Activated CD4-positive, alpha-beta T cell treated with anti-CD3 and anti-CD28 coated beads for 36 hours (primary cell): ENCODE measurements at regions of chrX and their contacts with region 1.

Region 1: DNA sequence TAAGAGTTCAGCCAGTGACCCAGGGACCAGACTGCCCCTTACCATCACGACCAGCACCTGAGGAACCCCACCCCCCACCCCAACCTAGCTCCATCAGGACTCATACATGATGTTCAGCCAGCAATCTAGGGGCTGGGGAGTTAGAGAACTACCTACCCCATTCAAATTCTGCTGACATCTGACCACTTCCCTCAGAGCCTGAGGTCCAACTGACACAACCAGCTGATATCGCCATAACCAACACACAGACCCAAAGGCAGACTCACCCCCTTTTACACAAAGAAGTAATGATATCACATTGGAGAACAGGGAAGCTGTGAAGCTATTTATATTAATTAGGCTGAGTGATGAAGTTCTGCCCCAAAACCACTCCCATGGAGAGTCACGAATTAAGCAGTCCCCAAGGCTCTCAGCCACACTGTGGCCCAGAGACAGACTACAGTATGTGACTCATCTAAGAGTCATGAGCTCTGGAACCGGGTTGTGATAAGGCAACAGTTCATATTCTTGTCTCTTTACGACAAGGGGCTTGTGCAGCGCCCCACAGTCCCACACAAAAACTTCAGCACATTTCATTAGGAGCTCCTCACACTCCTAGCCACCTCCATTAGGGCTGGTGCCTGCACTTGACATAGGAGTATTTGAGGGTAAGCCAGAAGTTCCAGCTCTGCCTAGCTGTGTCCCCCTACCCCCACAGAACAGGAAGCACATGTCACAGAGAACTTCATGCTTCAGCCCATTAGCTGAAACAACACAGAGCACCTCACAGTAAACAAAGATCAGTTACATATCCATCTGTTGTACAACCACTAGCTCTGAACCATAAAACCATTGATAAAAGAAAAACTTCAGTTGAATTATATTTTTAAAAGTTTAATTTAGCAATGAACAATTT is 184.7 kb upstream of the ZCCHC13 start:
- DNase-seq: no peak
- ATAC-seq: no peak
- H3K4me3 Mint-ChIP-seq: no peak overlapping the region
- H3K27ac Mint-ChIP-seq: no peak overlapping the region
- H3K4me1 Mint-ChIP-seq: no peaks in the 10 kb centered on the region
- H3K27me3 Mint-ChIP-seq: no peaks in the 10 kb centered on the region

Region 2: GRCh38 chrX:74138943-74139342 is 19.7 kb after region 1 on chrX:
- CTCF ChIA-PET with region 1: interaction called, 3 read pairs
- POLR2A ChIA-PET with region 1: interaction called, 12 read pairs
- intact Hi-C with region 1: no loop called
- DNase-seq: no peak
- ATAC-seq: no peak
- H3K4me3 Mint-ChIP-seq: no peak overlapping the region
- H3K27ac Mint-ChIP-seq: no peak overlapping the region
- H3K4me1 Mint-ChIP-seq: no peaks in the 10 kb centered on the region
- H3K27me3 Mint-ChIP-seq: no peaks in the 10 kb centered on the region

Region 3: GRCh38 chrX:74160358-74160757 is 41.1 kb after region 1 on chrX:
- CTCF ChIA-PET with region 1: no interaction called
- POLR2A ChIA-PET with region 1: no interaction called
- intact Hi-C with region 1: no loop called
- DNase-seq: no peak
- ATAC-seq: no peak
- H3K4me3 Mint-ChIP-seq: no peak overlapping the region
- H3K27ac Mint-ChIP-seq: no peak overlapping the region
- H3K4me1 Mint-ChIP-seq: no peaks in the 10 kb centered on the region
- H3K27me3 Mint-ChIP-seq: no peaks in the 10 kb centered on the region